PC-9 (cell line): ENCODE measurements at regions of chr2 and their contacts with region 1.

Region 1: GRCh38 chr2:174546581-174547506 is 50.8 kb downstream of the WIPF1 start:
- DNase-seq: peak; percentile 74 to 79
- H3K4me3 ChIP-seq: peak overlapping the region; percentile 58
- H3K27ac ChIP-seq: no peak overlapping the region
- H3K4me1 ChIP-seq: 0 out of 2 replicates have a peak, but pooled peaks cover 4% of the 10 kb centered on the region
- H3K27me3 ChIP-seq: 0 out of 2 replicates have a peak, but pooled peaks cover 5% of the 10 kb centered on the region
- CTCF ChIP-seq: peak; percentile 80

Region 2: GRCh38 chr2:172806493-172806892 is 1740.4 kb before region 1 on chr2:
- CTCF ChIA-PET with region 1: no interaction called
- POLR2A ChIA-PET with region 1: no interaction called
- intact Hi-C with region 1: loop called (anchors 2 kb)
- DNase-seq: peak; percentile 23 to 68
- H3K4me3 ChIP-seq: no peak overlapping the region
- H3K27ac ChIP-seq: no peak overlapping the region
- H3K4me1 ChIP-seq: no peaks in the 10 kb centered on the region
- H3K27me3 ChIP-seq: no peaks in the 10 kb centered on the region
- CTCF ChIP-seq: peak; percentile 100

Region 3: DNA sequence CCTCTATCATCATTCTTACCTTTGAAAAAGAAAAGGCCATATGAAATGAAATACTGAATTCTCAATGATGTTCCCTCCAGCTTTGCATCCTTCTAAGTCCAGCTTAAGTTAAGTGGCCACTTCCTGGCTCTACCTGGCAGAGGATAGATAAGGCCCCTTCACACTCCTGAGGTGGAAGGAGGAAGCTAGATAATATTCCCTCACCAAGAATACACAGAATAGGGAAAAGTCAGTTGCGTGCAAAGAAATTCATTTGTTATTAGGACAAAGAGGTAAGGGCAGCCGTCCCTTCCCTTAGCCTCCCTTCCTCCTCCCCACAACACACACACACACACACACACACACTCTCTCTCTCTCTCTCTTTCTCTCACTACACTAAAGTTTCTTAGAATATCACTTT is 336.0 kb before region 1 on chr2:
- CTCF ChIA-PET with region 1: no interaction called
- POLR2A ChIA-PET with region 1: no interaction called
- intact Hi-C with region 1: no loop called
- DNase-seq: no peak
- H3K4me3 ChIP-seq: no peak overlapping the region
- H3K27ac ChIP-seq: 0 out of 2 replicates have a peak overlapping the region, but pooled peaks have one; percentile 5
- H3K4me1 ChIP-seq: no peaks in the 10 kb centered on the region
- H3K27me3 ChIP-seq: no peaks in the 10 kb centered on the region
- CTCF ChIP-seq: no peak

Region 4: DNA sequence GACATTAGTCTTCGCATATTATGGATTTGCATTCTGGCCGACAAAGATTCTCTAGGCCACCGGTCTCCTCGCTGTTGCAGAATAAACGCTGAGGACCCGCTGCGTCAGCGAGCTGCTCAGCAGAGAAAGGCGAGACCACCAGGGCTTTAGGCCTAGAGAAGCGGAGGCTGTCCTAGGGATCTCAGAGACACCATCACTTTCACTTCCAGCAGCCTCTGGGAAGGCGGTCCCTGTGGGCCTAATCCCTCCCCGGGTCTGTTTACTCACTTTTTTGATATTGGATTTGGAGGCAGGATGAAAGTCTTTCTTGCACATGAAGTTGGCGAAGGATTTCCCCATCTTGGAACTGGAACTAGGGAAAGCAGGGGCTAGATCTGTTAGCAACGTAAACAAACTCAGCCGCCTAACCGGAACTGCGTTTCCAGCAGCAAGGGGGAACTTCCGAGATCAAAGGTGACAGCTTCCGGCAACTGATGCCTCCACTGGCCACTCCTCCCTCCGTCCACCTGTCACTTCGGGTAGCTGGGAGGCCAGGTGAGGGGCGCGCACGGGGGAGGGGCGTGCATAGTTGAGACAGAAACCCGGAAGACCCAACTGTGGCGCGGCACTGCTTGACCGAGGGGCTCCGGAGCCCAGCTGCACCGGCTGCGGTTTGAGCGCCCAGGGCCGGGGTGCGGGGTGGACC is 151.4 kb before region 1 on chr2 and contains the start of gene SCRN3:
- CTCF ChIA-PET with region 1: interaction called, 15 read pairs
- POLR2A ChIA-PET with region 1: interaction called, 5 read pairs
- intact Hi-C with region 1: loop called (anchors 1 kb)
- DNase-seq: peak; percentile 88 to 91
- H3K4me3 ChIP-seq: peak within 1 kb of the TSS; percentile 81
- H3K27ac ChIP-seq: peak within 1 kb of the TSS; percentile 40
- H3K4me1 ChIP-seq: peaks cover 27% of the 10 kb centered on the region
- H3K27me3 ChIP-seq: no peaks in the 10 kb centered on the region
- CTCF ChIP-seq: no peak
- total RNA-seq, gene SCRN3: 26.9 and 28.7 TPM in 2 replicates

Region 5: GRCh38 chr2:174487108-174487819 is 59.6 kb before region 1 on chr2:
- CTCF ChIA-PET with region 1: interaction called, 16 read pairs
- POLR2A ChIA-PET with region 1: no interaction called
- intact Hi-C with region 1: no loop called
- DNase-seq: peak; percentile 95 to 99
- H3K4me3 ChIP-seq: peak overlapping the region; percentile 94
- H3K27ac ChIP-seq: peak overlapping the region; percentile 45
- H3K4me1 ChIP-seq: peaks cover 12% of the 10 kb centered on the region
- H3K27me3 ChIP-seq: no peaks in the 10 kb centered on the region
- CTCF ChIP-seq: no peak

Region 6: DNA sequence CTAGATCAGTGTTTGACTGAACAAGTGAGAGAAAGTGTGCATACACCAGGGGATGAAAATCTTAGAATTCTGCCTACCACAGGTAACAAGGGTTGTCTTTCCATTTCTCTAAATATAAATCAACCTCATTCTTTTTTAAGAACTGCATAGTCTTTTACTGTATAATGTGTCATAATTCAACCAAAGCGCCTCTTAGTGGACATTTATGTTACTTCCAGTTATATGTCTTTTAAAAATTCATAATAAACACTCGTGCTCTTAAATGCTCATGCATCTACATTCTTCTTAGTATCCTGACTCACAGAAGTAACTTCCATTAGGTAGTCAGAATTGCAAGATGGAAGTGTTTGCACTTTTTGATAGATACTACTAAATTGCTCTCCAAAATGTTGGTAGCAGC is 141.2 kb after region 1 on chr2:
- CTCF ChIA-PET with region 1: interaction called, 7 read pairs
- POLR2A ChIA-PET with region 1: no interaction called
- intact Hi-C with region 1: loop called (anchors 2 kb)
- DNase-seq: no peak
- H3K4me3 ChIP-seq: no peak overlapping the region
- H3K27ac ChIP-seq: no peak overlapping the region
- H3K4me1 ChIP-seq: no peaks in the 10 kb centered on the region
- H3K27me3 ChIP-seq: no peaks in the 10 kb centered on the region
- CTCF ChIP-seq: peak; percentile 68